Activated CD4-positive, alpha-beta T cell treated with anti-CD3 and anti-CD28 coated beads for 36 hours (primary cell): ENCODE measurements at regions of chr19 and their contacts with region 1.

Region 1: DNA sequence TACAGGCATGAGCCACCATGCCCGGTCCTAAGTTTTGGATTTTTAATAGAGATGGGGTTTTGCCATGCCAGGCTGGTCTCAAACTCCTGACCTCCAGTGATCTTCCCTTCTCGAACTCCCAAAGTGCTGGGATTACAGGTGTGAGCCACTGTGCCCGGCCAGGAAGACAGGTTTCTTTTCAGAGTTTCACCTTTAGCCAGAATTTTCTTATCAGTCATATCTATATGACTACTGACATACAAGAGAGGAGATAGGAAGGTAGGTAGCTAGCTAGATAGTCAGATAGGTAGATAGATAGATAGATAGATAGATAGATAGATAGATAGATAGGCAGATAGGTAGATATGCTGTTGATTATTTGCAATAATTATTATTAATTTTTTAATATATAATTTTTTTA is 7.6 kb downstream of the CBLC start:
- DNase-seq: no peak
- ATAC-seq: no peak
- H3K4me3 Mint-ChIP-seq: no peak overlapping the region
- H3K27ac Mint-ChIP-seq: no peak overlapping the region
- H3K4me1 Mint-ChIP-seq: peaks cover 4% of the 10 kb centered on the region
- H3K27me3 Mint-ChIP-seq: no peaks in the 10 kb centered on the region

Region 2: GRCh38 chr19:44683417-44684210 is 101.6 kb before region 1 on chr19:
- CTCF ChIA-PET with region 1: no interaction called
- POLR2A ChIA-PET with region 1: no interaction called
- intact Hi-C with region 1: no loop called
- DNase-seq: no peak
- ATAC-seq: no peak
- H3K4me3 Mint-ChIP-seq: no peak overlapping the region
- H3K27ac Mint-ChIP-seq: no peak overlapping the region
- H3K4me1 Mint-ChIP-seq: peaks cover 9% of the 10 kb centered on the region
- H3K27me3 Mint-ChIP-seq: peaks cover 12% of the 10 kb centered on the region

Region 3: GRCh38 chr19:44752816-44753618 is 32.2 kb before region 1 on chr19:
- CTCF ChIA-PET with region 1: no interaction called
- POLR2A ChIA-PET with region 1: no interaction called
- intact Hi-C with region 1: no loop called
- DNase-seq: peak; percentile 98
- ATAC-seq: peak; percentile 79
- H3K4me3 Mint-ChIP-seq: peak overlapping the region; percentile 94
- H3K27ac Mint-ChIP-seq: peak overlapping the region; percentile 97
- H3K4me1 Mint-ChIP-seq: peaks cover 54% of the 10 kb centered on the region
- H3K27me3 Mint-ChIP-seq: no peaks in the 10 kb centered on the region

Region 4: DNA sequence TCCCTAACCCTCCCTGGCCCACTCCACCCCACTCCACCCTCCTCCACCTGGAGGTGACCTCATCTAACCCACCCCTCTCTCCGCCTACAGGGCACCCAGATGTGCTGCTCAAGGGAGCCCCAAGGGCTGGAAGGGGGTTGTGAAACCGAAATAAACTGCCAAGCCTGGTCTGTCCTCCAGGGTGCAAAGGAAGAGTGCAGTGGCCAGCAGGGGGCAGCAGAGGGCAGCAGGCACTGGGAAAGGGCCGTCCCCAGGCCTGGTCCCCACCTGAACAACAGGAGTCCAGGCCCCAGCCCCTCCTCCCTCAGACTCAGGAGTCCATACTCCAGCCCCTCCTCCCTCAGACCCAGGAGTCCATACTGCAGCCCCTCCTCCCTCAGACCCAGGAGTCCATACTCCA is 15.2 kb after region 1 on chr19:
- CTCF ChIA-PET with region 1: interaction called, 10 read pairs
- POLR2A ChIA-PET with region 1: no interaction called
- intact Hi-C with region 1: no loop called
- DNase-seq: peak; percentile 92
- ATAC-seq: peak; percentile 98
- H3K4me3 Mint-ChIP-seq: no peak overlapping the region
- H3K27ac Mint-ChIP-seq: no peak overlapping the region
- H3K4me1 Mint-ChIP-seq: peaks cover 11% of the 10 kb centered on the region
- H3K27me3 Mint-ChIP-seq: no peaks in the 10 kb centered on the region

Region 5: GRCh38 chr19:44813070-44813840 is 28.0 kb after region 1 on chr19:
- CTCF ChIA-PET with region 1: no interaction called
- POLR2A ChIA-PET with region 1: no interaction called
- intact Hi-C with region 1: no loop called
- DNase-seq: no peak
- ATAC-seq: no peak
- H3K4me3 Mint-ChIP-seq: no peak overlapping the region
- H3K27ac Mint-ChIP-seq: no peak overlapping the region
- H3K4me1 Mint-ChIP-seq: peaks cover 4% of the 10 kb centered on the region
- H3K27me3 Mint-ChIP-seq: peaks cover 19% of the 10 kb centered on the region

Region 6: GRCh38 chr19:44968118-44968517 is 182.9 kb after region 1 on chr19:
- CTCF ChIA-PET with region 1: no interaction called
- POLR2A ChIA-PET with region 1: no interaction called
- intact Hi-C with region 1: no loop called
- DNase-seq: no peak
- ATAC-seq: no peak
- H3K4me3 Mint-ChIP-seq: no peak overlapping the region
- H3K27ac Mint-ChIP-seq: no peak overlapping the region
- H3K4me1 Mint-ChIP-seq: no peaks in the 10 kb centered on the region
- H3K27me3 Mint-ChIP-seq: no peaks in the 10 kb centered on the region